HepG2 (cell line): ENCODE measurements at regions of chr10 and their contacts with region 1.

Region 1: DNA sequence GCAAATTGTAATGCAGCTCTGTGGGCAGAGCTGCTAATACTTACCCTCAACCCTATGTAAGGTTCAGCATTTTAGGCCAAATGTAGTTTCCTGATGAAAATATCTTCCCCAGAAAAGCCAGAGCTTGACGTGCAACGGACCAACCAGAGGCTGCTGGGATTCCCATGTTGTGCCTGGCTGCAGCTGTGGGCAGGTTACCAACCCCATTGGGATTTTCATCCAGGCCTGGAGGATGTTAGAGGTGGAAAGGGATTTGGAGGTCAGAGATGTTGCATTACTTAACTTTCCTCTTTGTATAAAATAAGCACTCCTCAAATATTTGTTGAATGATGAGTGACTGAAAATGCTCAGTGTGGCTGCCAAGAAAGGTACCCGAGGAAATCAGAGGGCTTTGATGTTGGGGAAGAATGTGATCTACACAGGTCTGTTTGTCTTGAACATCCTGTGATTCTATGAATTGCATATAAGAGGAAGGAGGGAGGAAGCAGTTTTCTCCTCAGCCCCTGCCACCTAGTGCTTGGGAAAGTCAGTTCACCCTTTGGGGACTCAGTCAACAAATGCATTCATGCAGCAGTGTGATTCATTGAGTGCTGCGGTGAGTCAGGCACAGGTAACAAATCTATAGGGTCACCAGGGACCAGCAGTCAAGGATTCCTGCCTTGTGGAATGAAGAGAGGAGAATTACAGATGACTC is 487.2 kb downstream of the RPS24 start:
- DNase-seq: peak; percentile 96
- ATAC-seq: peak; percentile 97
- H3K4me3 ChIP-seq: no peak overlapping the region
- H3K27ac ChIP-seq: no peak overlapping the region
- H3K4me1 ChIP-seq: peaks cover 51% of the 10 kb centered on the region
- H3K27me3 ChIP-seq: no peaks in the 10 kb centered on the region
- CTCF ChIP-seq: peak; percentile 75
- EP300 ChIP-seq: peak in 1 of 2 experiments; percentile 72; a peak in 2 of 4 replicates
- POLR2A ChIP-seq: no peak
- RAD21 ChIP-seq: peak; percentile 67; the same call in 1 of the 2 replicates

Region 2: GRCh38 chr10:78424719-78425118 is 96.2 kb before region 1 on chr10:
- CTCF ChIA-PET with region 1: interaction called, 7 read pairs
- POLR2A ChIA-PET with region 1: no interaction called
- in situ Hi-C with region 1: no loop called
- intact Hi-C with region 1: loop called (anchors 1 kb)
- DNase-seq: peak; percentile 48
- ATAC-seq: peak; percentile 91
- H3K4me3 ChIP-seq: no peak overlapping the region
- H3K27ac ChIP-seq: no peak overlapping the region
- H3K4me1 ChIP-seq: no peaks in the 10 kb centered on the region
- H3K27me3 ChIP-seq: peaks cover 5 to 30% of the 10 kb centered on the region in 2 experiments; a peak in 4 of 5 replicates
- CTCF ChIP-seq: peak; percentile 74
- EP300 ChIP-seq: no peak
- POLR2A ChIP-seq: no peak
- RAD21 ChIP-seq: 0 out of 2 replicates have a peak, but pooled peaks have one; percentile 20

Region 3: DNA sequence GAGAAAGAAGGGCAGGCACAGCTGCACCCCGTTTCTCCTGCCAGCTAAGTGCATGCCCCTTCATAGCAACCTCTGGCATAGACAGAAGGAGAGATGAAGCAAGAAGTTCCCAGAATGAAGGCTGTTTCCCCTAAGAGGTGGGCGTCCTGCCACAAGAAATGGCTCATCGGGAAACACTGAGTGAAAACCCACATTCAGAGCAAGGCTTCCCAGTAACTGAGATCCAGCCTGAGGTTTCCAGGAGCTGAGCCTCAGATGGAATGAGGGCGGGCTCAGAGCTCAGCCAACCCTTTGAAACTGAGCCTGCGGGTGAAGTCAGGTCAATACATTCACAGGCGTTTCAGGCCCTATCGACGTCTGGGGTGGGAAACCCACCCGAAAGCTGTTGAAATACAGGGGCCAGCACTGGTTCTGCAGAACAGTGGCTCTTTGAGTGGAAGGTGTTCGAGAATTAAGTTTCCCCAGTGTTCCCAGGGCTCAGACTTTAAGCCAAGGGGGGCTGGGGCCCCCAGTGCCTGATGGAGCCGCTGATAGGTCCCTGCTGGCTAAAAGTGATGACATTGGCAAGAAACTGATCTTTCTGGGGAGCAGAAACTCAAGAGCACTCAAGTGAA is 23.0 kb after region 1 on chr10:
- CTCF ChIA-PET with region 1: no interaction called
- POLR2A ChIA-PET with region 1: interaction called, 10 read pairs
- in situ Hi-C with region 1: no loop called
- intact Hi-C with region 1: no loop called
- DNase-seq: peak; percentile 62
- ATAC-seq: peak; percentile 87
- H3K4me3 ChIP-seq: peak overlapping the region in 1 of 3 experiments; percentile 11; a peak in 2 of 6 replicates
- H3K27ac ChIP-seq: peak overlapping the region; percentile 58
- H3K4me1 ChIP-seq: peaks cover 86% of the 10 kb centered on the region
- H3K27me3 ChIP-seq: no peaks in the 10 kb centered on the region
- CTCF ChIP-seq: no peak
- EP300 ChIP-seq: no peak
- POLR2A ChIP-seq: peak; percentile 7 to 16; a peak in 1 of 4 replicates
- RAD21 ChIP-seq: no peak

Region 4: DNA sequence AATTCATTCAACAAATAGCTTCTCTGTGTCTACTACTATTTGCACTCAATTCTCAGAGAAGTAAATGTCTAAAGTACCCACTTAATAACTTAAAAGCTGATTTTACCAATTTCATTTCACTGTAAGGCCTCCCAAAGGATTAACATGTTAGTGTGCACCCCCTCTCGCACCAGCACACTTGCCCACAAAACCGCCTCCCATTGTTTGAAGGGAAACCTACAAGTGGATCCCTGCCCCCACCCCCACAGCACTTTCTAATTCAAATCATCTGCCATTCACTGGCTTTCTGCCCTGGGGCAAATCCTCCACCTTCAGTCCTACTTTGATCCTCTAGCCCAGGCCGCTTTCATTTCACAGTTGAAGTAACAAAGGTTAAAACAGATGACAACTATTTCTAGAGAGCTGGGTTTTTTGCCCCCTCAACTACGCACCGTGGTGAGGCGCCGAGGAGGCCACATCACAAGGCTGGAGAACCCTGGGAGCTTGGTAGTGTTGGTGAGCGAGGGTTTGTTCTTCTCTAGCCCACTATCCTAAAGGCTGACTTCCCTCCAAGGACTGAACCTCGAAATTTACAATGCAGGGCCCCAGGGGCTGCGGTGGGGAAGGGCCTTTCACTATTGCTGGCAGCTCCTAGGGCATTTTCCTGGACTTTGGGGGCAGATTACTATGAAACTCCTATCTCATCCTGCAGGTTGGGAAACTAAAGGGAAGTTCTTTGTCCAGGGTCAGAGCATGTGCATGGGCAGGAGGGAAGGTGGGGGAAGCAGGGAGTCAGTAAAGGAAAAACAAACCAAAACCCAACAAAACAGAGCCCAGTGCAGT is 30.5 kb after region 1 on chr10:
- CTCF ChIA-PET with region 1: no interaction called
- POLR2A ChIA-PET with region 1: interaction called, 4 read pairs
- in situ Hi-C with region 1: no loop called
- intact Hi-C with region 1: loop called (anchors 2 kb)
- DNase-seq: peak; percentile 81
- ATAC-seq: peak; percentile 81
- H3K4me3 ChIP-seq: peak overlapping the region; percentile 3 to 50 (median 4); a peak in 5 of 6 replicates
- H3K27ac ChIP-seq: peak overlapping the region; percentile 97
- H3K4me1 ChIP-seq: peaks cover 81% of the 10 kb centered on the region
- H3K27me3 ChIP-seq: no peaks in the 10 kb centered on the region
- CTCF ChIP-seq: no peak
- EP300 ChIP-seq: no peak
- POLR2A ChIP-seq: 0 out of 4 replicates have a peak, but pooled peaks have one; percentile 15 to 31
- RAD21 ChIP-seq: no peak

Region 5: DNA sequence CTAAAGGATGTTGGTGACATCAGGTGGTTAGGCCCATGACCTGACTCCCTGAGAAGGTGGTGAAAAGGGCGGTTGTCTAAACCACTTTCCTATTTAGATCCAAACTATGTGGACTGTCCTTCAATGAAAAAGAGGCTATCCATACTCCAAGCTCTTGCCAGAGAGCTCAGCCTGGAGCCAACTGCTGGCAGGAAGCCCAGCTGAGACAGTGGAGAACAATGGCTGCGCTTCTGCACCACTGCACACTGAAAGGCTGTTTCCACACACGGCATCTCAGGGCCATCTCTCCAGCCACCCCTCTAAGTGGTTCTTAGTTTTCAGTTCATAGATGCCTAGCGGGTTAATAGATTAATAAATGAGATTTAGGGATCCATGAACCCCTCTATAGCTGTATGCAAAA is 59.1 kb after region 1 on chr10:
- CTCF ChIA-PET with region 1: no interaction called
- POLR2A ChIA-PET with region 1: no interaction called
- in situ Hi-C with region 1: no loop called
- intact Hi-C with region 1: loop called (anchors 1 kb)
- DNase-seq: peak; percentile 30
- ATAC-seq: peak; percentile 60
- H3K4me3 ChIP-seq: no peak overlapping the region
- H3K27ac ChIP-seq: no peak overlapping the region
- H3K4me1 ChIP-seq: peaks cover 79% of the 10 kb centered on the region
- H3K27me3 ChIP-seq: no peaks in the 10 kb centered on the region
- CTCF ChIP-seq: peak; percentile 8; the same call in 1 of the 2 replicates
- EP300 ChIP-seq: no peak
- POLR2A ChIP-seq: no peak
- RAD21 ChIP-seq: no peak